Body of pancreas (tissue), 4 donors: ENCODE measurements at regions of chr4 and their contacts with region 1.

Region 1: DNA sequence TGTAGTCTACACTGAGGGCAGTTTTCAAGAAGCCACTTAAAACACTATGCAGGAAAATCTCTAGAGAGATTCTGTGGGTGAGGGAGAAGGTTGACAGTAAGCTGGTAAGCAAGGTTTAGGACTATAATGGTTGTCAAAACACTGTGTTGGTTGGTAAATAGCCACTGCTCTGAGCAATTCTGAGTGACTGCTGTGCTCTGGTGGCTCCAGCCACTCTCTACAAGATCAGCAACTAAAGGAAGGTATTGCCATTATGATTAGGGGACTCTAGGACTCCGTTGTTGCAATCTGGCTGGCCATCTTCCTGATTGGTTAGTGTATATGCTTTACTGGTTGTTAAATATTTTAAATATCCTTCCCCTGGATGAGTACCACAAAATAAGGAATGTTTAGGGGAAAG is 5.5 kb upstream of the FAM47E start:
- DNase-seq: no peak
- ATAC-seq: no peak
- H3K4me3 ChIP-seq: no peak overlapping the region
- H3K27ac ChIP-seq: no peak overlapping the region
- H3K4me1 ChIP-seq: peaks cover 8% of the 10 kb centered on the region
- H3K27me3 ChIP-seq: no peaks in the 10 kb centered on the region
- CTCF ChIP-seq: peak in 2 of 7 experiments; percentile 10 to 23
- POLR2A ChIP-seq: no peak

Region 2: GRCh38 chr4:76120199-76120598 is 125.8 kb before region 1 on chr4:
- intact Hi-C with region 1: no loop called
- DNase-seq: peak in 1 of 4 donors; percentile 18
- ATAC-seq: no peak
- H3K4me3 ChIP-seq: no peak overlapping the region
- H3K27ac ChIP-seq: no peak overlapping the region
- H3K4me1 ChIP-seq: no peaks in the 10 kb centered on the region
- H3K27me3 ChIP-seq: no peaks in the 10 kb centered on the region
- CTCF ChIP-seq: no peak
- POLR2A ChIP-seq: no peak

Region 3: DNA sequence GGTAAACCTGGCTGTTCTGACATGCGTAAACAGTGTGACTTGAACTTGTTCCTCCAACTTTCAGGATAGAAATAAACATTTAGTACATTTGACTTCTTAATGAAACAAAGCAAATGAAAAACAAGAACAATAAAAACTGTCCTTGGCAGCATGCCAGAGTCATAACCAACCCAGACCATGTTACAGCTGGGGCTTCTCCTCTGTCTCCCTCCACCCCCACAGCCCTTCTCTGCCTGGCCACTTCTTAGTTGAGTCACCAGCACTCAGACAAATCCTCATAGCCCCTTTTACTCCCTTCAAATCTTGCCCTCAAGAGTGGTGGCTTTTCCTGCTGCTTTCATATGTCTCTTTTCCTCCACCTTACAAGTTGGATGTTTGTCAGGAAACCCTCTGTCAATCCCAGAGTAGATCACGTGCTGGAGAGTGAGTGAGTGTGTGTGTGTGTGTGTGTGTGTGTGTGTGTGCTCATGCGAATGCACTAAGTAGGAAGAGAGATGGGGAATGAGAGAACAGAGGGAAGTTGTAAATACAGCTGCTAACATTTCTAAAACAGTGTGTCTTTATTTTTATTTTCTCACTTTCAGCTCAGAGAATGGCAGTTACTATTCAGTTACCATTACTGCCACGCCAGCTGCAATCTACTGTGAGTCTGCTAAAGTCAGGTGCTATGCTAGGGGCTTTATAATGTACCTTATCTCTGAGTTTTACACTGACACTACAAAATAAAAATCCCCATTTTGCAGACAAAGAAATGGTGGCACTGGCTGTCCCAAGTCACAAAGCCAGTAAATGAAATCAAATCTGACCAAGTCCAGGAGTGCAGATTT is 47.4 kb before region 1 on chr4:
- intact Hi-C with region 1: loop called (anchors 10 kb)
- DNase-seq: peak; percentile 66 to 84 (median 72)
- ATAC-seq: peak; percentile 68
- H3K4me3 ChIP-seq: no peak overlapping the region
- H3K27ac ChIP-seq: peak overlapping the region; percentile 75 to 88 (median 86)
- H3K4me1 ChIP-seq: peaks cover 95% of the 10 kb centered on the region
- H3K27me3 ChIP-seq: no peaks in the 10 kb centered on the region
- CTCF ChIP-seq: no peak
- POLR2A ChIP-seq: peak in 1 of 3 donors; percentile 25